ENCODE measurements at regions of chr18 and their contacts with region 1.

Region 1: GRCh38 chr18:23935804-23936203 is 78.8 kb upstream of the TTC39C start:
- DNase-seq: peak; percentile 22 to 49 (median 34)
- H3K4me3 ChIP-seq: no peak overlapping the region
- H3K4me3 Mint-ChIP-seq: peak overlapping the region in 7 of 8 donors; percentile 33 to 75 (median 66)
- H3K27ac ChIP-seq: no peak overlapping the region
- H3K27ac Mint-ChIP-seq: peak overlapping the region; percentile 12 to 89 (median 49)
- H3K4me1 ChIP-seq: peaks cover 58% of the 10 kb centered on the region
- H3K4me1 Mint-ChIP-seq: peaks cover 36 to 71% (median 53%) of the 10 kb centered on the region in 4 donors
- H3K27me3 ChIP-seq: no peaks in the 10 kb centered on the region
- H3K27me3 Mint-ChIP-seq: no peaks in the 10 kb centered on the region

Region 2: DNA sequence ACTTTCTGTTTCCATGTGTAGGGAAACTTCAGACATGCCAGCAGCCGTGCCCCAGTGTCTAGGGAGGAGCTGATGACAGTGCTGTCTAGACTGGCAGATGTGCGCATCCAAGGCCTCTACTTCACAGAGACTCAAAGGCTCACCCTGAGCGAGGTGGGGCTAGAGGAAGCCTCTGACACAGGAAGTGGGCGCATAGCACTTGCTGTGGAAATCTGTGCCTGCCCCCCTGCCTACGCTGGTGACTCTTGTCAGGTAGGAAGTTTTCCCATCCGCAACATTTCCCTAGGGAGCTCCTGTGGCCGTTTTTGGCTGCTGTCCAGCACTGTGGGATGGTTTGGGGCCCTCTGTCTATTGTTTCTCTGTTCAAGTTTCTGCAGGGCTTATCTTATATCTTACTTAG is 64.4 kb before region 1 on chr18:
- CTCF ChIA-PET with region 1: no interaction called
- POLR2A ChIA-PET with region 1: no interaction called
- intact Hi-C with region 1: no loop called
- DNase-seq: peak; percentile 68 to 94 (median 76)
- H3K4me3 ChIP-seq: no peak overlapping the region
- H3K4me3 Mint-ChIP-seq: peak overlapping the region in 7 of 8 donors; percentile 68 to 81 (median 72)
- H3K27ac ChIP-seq: peak overlapping the region; percentile 7
- H3K27ac Mint-ChIP-seq: peak overlapping the region; percentile 93 to 98 (median 97)
- H3K4me1 ChIP-seq: peaks cover 44% of the 10 kb centered on the region
- H3K4me1 Mint-ChIP-seq: peaks cover 23 to 51% (median 39%) of the 10 kb centered on the region in 4 donors
- H3K27me3 ChIP-seq: no peaks in the 10 kb centered on the region
- H3K27me3 Mint-ChIP-seq: no peaks in the 10 kb centered on the region

Region 3: GRCh38 chr18:23890589-23890988 is 45.2 kb before region 1 on chr18:
- CTCF ChIA-PET with region 1: no interaction called
- POLR2A ChIA-PET with region 1: no interaction called
- intact Hi-C with region 1: no loop called
- DNase-seq: no peak
- H3K4me3 ChIP-seq: no peak overlapping the region
- H3K4me3 Mint-ChIP-seq: no peak overlapping the region
- H3K27ac ChIP-seq: no peak overlapping the region
- H3K27ac Mint-ChIP-seq: no peak overlapping the region
- H3K4me1 ChIP-seq: peaks cover 16% of the 10 kb centered on the region
- H3K4me1 Mint-ChIP-seq: peaks cover 8 to 15% (median 12%) of the 10 kb centered on the region in 4 donors
- H3K27me3 ChIP-seq: no peaks in the 10 kb centered on the region
- H3K27me3 Mint-ChIP-seq: no peaks in the 10 kb centered on the region

Region 4: DNA sequence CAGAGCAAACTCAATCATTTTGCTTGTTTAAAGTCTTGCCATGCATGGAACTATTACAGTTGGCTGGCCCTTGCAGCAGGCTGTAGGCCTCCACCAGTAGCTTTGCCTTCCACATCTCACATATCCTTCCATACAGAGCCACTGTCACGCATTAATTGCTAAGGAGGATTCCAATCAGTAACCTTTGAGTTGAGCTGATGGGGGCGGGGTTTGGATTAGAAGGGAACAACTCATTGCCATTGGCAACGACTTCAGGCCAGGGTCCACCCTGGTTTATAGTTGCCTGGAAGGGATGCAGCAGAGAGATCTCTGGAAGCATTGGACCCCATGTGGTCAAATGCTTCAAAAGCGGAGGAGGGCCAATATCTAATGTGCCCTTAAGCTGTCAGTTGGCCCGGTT is 15.4 kb after region 1 on chr18:
- CTCF ChIA-PET with region 1: interaction called, 10 read pairs
- POLR2A ChIA-PET with region 1: interaction called, 5 read pairs
- intact Hi-C with region 1: no loop called
- DNase-seq: no peak
- H3K4me3 ChIP-seq: no peak overlapping the region
- H3K4me3 Mint-ChIP-seq: no peak overlapping the region
- H3K27ac ChIP-seq: no peak overlapping the region
- H3K27ac Mint-ChIP-seq: peak overlapping the region in 1 of 7 donors; percentile 50
- H3K4me1 ChIP-seq: no peaks in the 10 kb centered on the region
- H3K4me1 Mint-ChIP-seq: peaks cover 0 to 5% (median 0%) of the 10 kb centered on the region in 4 donors
- H3K27me3 ChIP-seq: no peaks in the 10 kb centered on the region
- H3K27me3 Mint-ChIP-seq: no peaks in the 10 kb centered on the region

Region 5: GRCh38 chr18:24031916-24032315 is 96.1 kb after region 1 on chr18:
- CTCF ChIA-PET with region 1: no interaction called
- POLR2A ChIA-PET with region 1: no interaction called
- intact Hi-C with region 1: no loop called
- DNase-seq: no peak
- H3K4me3 ChIP-seq: no peak overlapping the region
- H3K4me3 Mint-ChIP-seq: peak overlapping the region in 6 of 8 donors; percentile 14 to 69 (median 56)
- H3K27ac ChIP-seq: no peak overlapping the region
- H3K27ac Mint-ChIP-seq: peak overlapping the region in 6 of 7 donors; percentile 15 to 80 (median 59)
- H3K4me1 ChIP-seq: peaks cover 96% of the 10 kb centered on the region
- H3K4me1 Mint-ChIP-seq: peaks cover 66 to 93% (median 82%) of the 10 kb centered on the region in 4 donors
- H3K27me3 ChIP-seq: no peaks in the 10 kb centered on the region
- H3K27me3 Mint-ChIP-seq: no peaks in the 10 kb centered on the region

Measured in CD4-positive, alpha-beta memory T cell (primary cell).